ENCODE measurements at regions of chr9 and their contacts with region 1.

Region 1: GRCh38 chr9:114385412-114386181 is 2.2 kb downstream of the AKNA start:
- DNase-seq: peak; percentile 89
- H3K4me3 Mint-ChIP-seq: peak overlapping the region; percentile 99
- H3K27ac Mint-ChIP-seq: peak overlapping the region; percentile 99
- H3K4me1 Mint-ChIP-seq: peaks cover 68% of the 10 kb centered on the region
- H3K27me3 Mint-ChIP-seq: no peaks in the 10 kb centered on the region

Region 2: DNA sequence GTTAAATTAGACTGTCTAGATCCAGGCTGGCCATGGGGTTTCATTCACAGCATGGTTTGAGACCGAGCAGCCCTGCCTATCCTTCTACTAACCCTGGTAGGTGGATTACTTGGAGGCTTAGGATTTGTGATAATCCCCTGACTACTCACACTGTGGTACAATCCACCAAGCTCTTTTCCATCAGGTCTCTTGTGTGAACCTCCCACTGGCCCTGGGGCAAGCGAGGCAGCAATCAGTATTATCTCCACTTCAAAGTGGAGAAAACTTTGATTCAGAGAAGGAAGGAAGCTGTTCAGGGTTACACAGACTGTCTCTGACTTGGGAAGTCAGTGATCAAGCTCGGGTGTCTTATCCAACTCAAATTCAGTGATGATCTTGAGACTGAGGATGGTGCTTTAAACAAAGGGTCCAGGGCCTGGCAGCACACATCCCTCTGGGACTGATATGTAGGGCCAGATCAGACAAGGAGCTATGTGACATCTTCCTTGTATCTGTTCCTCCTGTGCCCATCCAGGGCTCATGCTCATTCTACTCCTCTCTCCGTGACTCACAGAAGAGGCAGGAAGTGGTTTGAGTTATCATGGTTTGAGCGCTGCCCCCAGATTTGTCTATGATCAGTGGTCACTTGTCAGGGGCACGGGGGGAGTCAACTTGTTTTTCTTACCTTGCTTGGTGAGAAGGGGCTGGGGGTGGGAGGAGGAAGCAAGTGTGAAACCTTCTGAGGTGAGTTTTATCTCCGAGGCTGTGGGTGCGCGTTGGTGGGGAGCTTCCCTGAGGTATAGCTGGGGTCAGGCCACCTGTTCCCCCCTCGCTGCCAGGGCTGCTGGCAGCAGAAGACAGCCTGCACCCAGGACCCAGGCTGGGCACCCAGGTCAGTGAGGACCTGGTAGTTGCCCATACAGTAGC is 873.5 kb before region 1 on chr9:
- intact Hi-C with region 1: loop called (anchors 10 kb)
- DNase-seq: peak; percentile 66
- H3K4me3 Mint-ChIP-seq: peak overlapping the region; percentile 54
- H3K27ac Mint-ChIP-seq: peak overlapping the region; percentile 96
- H3K4me1 Mint-ChIP-seq: peaks cover 56% of the 10 kb centered on the region
- H3K27me3 Mint-ChIP-seq: peaks cover 4% of the 10 kb centered on the region

Region 3: GRCh38 chr9:114348906-114349482 is 36.6 kb before region 1 on chr9:
- intact Hi-C with region 1: loop called (anchors 1 kb)
- DNase-seq: peak; percentile 50
- H3K4me3 Mint-ChIP-seq: peak overlapping the region; percentile 5
- H3K27ac Mint-ChIP-seq: peak overlapping the region; percentile 93
- H3K4me1 Mint-ChIP-seq: peaks cover 44% of the 10 kb centered on the region
- H3K27me3 Mint-ChIP-seq: no peaks in the 10 kb centered on the region

Region 4: DNA sequence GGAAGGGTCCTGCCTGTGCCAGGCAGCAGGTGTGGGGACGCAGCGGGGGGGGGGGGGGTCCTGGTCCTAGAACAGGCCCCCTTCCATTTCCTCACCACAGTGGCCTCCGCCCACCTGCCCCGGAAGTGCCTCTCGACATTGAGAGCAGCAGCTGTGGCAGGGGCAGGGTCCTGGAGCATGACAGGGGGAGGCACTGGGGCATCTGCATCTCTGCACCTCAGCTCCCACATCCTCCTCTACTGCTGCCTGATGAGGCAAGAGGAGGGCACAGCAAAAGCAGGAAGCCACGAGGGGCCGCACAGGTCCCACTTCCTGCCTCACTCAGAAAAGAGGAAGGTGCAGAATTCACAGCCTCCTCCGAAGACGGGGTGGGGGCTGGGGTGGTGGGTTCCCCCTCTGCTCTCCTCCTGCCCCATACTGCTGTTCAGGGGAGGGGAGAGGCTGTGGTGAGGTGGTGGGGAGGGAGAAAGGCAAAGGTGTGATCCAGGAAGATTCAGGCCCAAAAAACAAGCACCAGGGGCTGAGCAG is 12.6 kb before region 1 on chr9:
- intact Hi-C with region 1: loop called (anchors 1 kb)
- DNase-seq: peak; percentile 83
- H3K4me3 Mint-ChIP-seq: peak overlapping the region; percentile 76
- H3K27ac Mint-ChIP-seq: peak overlapping the region; percentile 85
- H3K4me1 Mint-ChIP-seq: peaks cover 77% of the 10 kb centered on the region
- H3K27me3 Mint-ChIP-seq: no peaks in the 10 kb centered on the region

Region 5: GRCh38 chr9:114587385-114588202 is 202.0 kb after region 1 on chr9 and contains the start of gene ATP6V1G1:
- intact Hi-C with region 1: loop called (anchors 1 kb)
- DNase-seq: peak; percentile 99
- H3K4me3 Mint-ChIP-seq: peak within 1 kb of the TSS; percentile 98
- H3K27ac Mint-ChIP-seq: peak within 1 kb of the TSS; percentile 98
- H3K4me1 Mint-ChIP-seq: peaks cover 40% of the 10 kb centered on the region
- H3K27me3 Mint-ChIP-seq: peaks cover 4% of the 10 kb centered on the region
- total RNA-seq, gene ATP6V1G1: 45.2 and 48.1 TPM in 2 replicates

Region 6: GRCh38 chr9:114696814-114697544 is 311.4 kb after region 1 on chr9:
- intact Hi-C with region 1: loop called (anchors 1 kb)
- DNase-seq: peak; percentile 75
- H3K4me3 Mint-ChIP-seq: peak overlapping the region; percentile 52
- H3K27ac Mint-ChIP-seq: peak overlapping the region; percentile 96
- H3K4me1 Mint-ChIP-seq: peaks cover 87% of the 10 kb centered on the region
- H3K27me3 Mint-ChIP-seq: no peaks in the 10 kb centered on the region